ENCODE measurements at regions of chr1 and their contacts with region 1.

Region 1: DNA sequence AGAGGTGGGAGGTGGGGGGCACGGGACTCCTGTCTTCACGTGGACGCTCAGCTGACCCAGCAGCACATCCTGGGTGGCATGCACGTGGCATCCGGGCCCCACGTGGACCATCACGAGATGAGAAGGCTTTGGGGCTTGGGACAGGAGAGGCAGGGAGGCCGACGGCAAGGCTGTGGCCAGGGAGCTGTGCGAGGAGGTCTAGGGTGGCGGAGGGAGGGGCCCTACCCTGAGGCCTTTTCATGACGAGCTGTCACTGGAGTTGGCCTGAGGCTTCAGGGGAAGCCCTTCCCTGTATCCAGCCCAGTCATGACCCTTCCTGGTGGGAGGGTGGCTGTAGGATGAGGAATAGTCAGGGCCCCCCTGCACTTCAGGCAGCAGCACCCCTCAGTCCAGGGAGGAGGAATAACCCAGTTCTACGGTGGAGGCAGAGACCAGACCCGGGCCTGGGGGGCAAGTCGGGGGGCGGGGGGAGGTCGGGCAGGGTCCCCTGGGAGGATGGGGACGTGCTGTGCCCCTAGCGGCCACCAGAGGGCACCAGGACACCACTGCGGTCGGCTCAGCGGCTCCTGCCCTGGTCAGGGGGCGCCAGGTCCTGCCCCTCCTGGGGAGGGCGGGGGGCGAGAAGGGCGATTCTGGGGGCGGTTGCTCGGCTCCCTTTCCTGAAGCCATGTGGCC is 2.0 kb upstream of the PERM1 start:
- DNase-seq: peak in 1 of 2 donors; percentile 58
- ATAC-seq: peak; percentile 80
- H3K4me3 ChIP-seq: no peak overlapping the region
- H3K27ac ChIP-seq: no peak overlapping the region
- H3K4me1 ChIP-seq: no peaks in the 10 kb centered on the region
- H3K27me3 ChIP-seq: no peaks in the 10 kb centered on the region

Region 2: DNA sequence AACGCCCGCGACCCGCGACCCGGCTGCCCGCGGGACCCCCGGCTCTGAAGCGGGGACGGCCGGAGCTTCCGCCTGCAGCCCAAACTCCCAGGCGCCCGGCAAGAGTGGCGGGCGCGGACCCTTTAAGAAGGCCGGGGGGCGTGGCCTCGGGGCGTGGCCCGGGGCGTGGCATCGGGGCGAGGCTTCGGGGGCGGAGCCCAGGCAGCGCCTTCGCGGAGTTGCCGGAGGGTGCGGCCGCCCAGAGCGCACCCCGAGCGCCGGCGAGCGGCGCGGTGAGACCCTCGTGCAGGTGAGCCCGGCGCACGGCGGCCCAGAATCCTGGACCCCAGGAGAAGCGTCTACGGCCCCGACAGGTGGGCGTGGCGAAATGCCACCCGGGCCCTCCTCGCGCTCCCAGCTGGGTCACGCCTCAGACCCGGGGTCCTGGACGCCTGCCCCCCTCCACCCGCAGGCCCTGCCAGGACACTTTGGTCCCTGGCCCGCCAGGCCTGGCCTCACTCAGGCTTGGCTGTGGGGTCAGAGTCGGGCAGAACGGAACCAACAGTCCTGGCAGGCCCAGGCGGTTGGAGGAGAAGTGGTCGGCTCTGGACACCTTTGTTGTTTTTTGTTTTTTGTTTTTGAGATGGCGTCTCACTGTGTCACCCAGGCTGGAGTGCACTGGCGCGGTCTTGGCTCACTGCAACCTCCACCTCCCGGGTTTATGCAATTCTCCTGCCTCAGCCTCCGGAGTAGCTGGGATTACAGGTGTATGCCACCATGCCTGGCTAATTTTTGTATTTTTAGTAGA is 75.8 kb after region 1 on chr1:
- intact Hi-C with region 1: loop called in 1 of 2 experiments (anchors 2 kb)
- DNase-seq: peak; percentile 90 to 95
- ATAC-seq: peak; percentile 76
- H3K4me3 ChIP-seq: peak overlapping the region; percentile 28 to 52
- H3K27ac ChIP-seq: no peak overlapping the region
- H3K4me1 ChIP-seq: no peaks in the 10 kb centered on the region
- H3K27me3 ChIP-seq: no peaks in the 10 kb centered on the region

Region 3: GRCh38 chr1:1069061-1069708 is 85.2 kb after region 1 on chr1:
- intact Hi-C with region 1: loop called in 1 of 2 experiments (anchors 5 kb)
- DNase-seq: peak; percentile 66 to 87
- ATAC-seq: peak; percentile 40
- H3K4me3 ChIP-seq: peak overlapping the region in 1 of 2 donors; percentile 28
- H3K27ac ChIP-seq: no peak overlapping the region
- H3K4me1 ChIP-seq: no peaks in the 10 kb centered on the region
- H3K27me3 ChIP-seq: no peaks in the 10 kb centered on the region

Region 4: GRCh38 chr1:1291548-1292441 is 307.9 kb after region 1 on chr1:
- intact Hi-C with region 1: loop called in 1 of 2 experiments (anchors 10 kb)
- DNase-seq: no peak
- ATAC-seq: peak; percentile 65
- H3K4me3 ChIP-seq: no peak overlapping the region
- H3K27ac ChIP-seq: no peak overlapping the region
- H3K4me1 ChIP-seq: no peaks in the 10 kb centered on the region
- H3K27me3 ChIP-seq: no peaks in the 10 kb centered on the region

Measured in aorta (tissue), 5 donors.